SK-N-SH (cell line): ENCODE measurements at regions of chr2 and their contacts with region 1.

Region 1: GRCh38 chr2:160970052-160970965 is 189.9 kb upstream of the TANK start:
- DNase-seq: peak; percentile 69
- H3K4me3 ChIP-seq: no peak overlapping the region
- H3K27ac ChIP-seq: peak overlapping the region; percentile 62 to 75; a peak in 3 of 4 replicates
- H3K4me1 ChIP-seq: peaks cover 0 to 6% of the 10 kb centered on the region in 2 experiments; a peak in 2 of 4 replicates
- H3K27me3 ChIP-seq: no peaks in the 10 kb centered on the region
- CTCF ChIP-seq: peak; percentile 87
- EP300 ChIP-seq: no peak
- RAD21 ChIP-seq: peak; percentile 93

Region 2: DNA sequence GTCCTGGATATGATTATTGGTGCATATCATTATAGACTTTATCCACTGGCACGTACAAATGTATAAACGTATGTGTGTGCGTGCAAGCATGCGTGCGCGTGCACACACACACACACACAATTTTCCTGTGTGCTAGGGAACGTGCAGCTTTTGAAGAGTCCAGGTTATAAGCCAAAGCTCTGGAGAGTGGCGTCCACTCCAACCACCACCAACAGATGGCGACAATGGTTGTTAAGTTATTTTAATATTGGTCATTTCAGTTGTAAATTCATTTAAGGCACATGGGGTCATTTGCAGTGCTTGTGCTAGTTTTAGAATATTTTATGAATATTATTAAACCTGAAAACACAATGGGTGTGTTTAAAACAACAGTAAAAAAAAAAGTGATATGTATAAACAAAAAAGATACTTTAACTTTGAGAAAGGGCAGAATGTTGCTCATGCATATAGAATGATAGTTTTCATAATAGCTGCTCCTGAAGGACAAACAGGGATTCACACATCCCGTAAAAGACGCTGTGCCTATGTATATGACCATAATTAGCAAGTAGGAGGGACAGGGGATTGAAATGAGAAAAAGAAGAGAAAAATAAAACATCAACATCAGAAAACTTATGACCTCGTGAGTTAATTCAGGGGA is 646.0 kb before region 1 on chr2:
- CTCF ChIA-PET with region 1: interaction called, 25 read pairs
- POLR2A ChIA-PET with region 1: no interaction called
- DNase-seq: peak; percentile 39
- H3K4me3 ChIP-seq: no peak overlapping the region
- H3K27ac ChIP-seq: 0 out of 4 replicates have a peak overlapping the region, but pooled peaks of 1 of the 2 experiments have one; percentile 20
- H3K4me1 ChIP-seq: peaks cover 0 to 3% of the 10 kb centered on the region in 2 experiments; a peak in 3 of 4 replicates
- H3K27me3 ChIP-seq: no peaks in the 10 kb centered on the region
- CTCF ChIP-seq: peak; percentile 81
- EP300 ChIP-seq: no peak
- RAD21 ChIP-seq: peak; percentile 80

Region 3: GRCh38 chr2:160429248-160430000 is 540.9 kb before region 1 on chr2:
- CTCF ChIA-PET with region 1: interaction called, 29 read pairs
- POLR2A ChIA-PET with region 1: no interaction called
- DNase-seq: no peak
- H3K4me3 ChIP-seq: no peak overlapping the region; a peak in 1 of 4 replicates
- H3K27ac ChIP-seq: peak overlapping the region; percentile 39 to 64
- H3K4me1 ChIP-seq: peaks cover 17 to 40% of the 10 kb centered on the region in 2 experiments; a peak in 3 of 4 replicates
- H3K27me3 ChIP-seq: no peaks in the 10 kb centered on the region
- CTCF ChIP-seq: peak; percentile 77
- EP300 ChIP-seq: no peak
- RAD21 ChIP-seq: peak; percentile 64

Region 4: GRCh38 chr2:160489111-160489510 is 481.2 kb before region 1 on chr2:
- CTCF ChIA-PET with region 1: interaction called, 12 read pairs
- POLR2A ChIA-PET with region 1: no interaction called
- DNase-seq: no peak
- H3K4me3 ChIP-seq: no peak overlapping the region
- H3K27ac ChIP-seq: peak overlapping the region in 1 of 2 experiments; percentile 11; a peak in 1 of 4 replicates
- H3K4me1 ChIP-seq: peaks cover 26 to 37% of the 10 kb centered on the region in 2 experiments; a peak in 3 of 4 replicates
- H3K27me3 ChIP-seq: no peaks in the 10 kb centered on the region
- CTCF ChIP-seq: no peak
- EP300 ChIP-seq: no peak
- RAD21 ChIP-seq: no peak

Region 5: DNA sequence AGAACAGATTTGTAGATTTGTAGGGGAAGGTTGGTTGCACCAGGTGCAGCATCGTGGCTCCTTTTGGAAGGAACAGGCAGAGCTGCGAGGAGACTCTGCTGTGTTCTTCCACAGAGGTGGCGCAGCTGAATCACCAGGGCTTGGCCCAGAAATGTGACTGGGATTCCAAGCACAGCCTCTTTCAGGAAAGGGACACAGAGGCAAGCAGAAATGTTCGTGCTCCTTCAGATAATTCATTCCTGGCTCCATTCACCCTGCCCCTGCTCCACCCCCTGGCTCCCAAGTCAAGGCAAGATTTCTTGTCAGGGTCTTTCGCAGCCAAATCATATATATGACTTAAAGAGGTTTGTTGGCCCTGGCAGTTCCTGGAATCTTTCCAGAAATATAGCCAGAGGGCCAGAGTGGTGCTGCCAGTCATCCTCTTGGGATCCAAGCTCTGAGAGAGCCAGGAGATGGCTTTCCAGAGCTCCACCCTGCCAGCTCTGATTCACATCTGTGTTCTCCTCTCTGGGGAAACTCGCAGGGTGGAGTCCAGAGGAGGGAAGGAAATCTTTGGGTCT is 14.0 kb before region 1 on chr2:
- CTCF ChIA-PET with region 1: interaction called, 14 read pairs
- POLR2A ChIA-PET with region 1: no interaction called
- DNase-seq: peak; percentile 11
- H3K4me3 ChIP-seq: no peak overlapping the region
- H3K27ac ChIP-seq: no peak overlapping the region
- H3K4me1 ChIP-seq: peaks cover 0 to 3% of the 10 kb centered on the region in 2 experiments; a peak in 1 of 4 replicates
- H3K27me3 ChIP-seq: no peaks in the 10 kb centered on the region
- CTCF ChIP-seq: no peak
- EP300 ChIP-seq: no peak
- RAD21 ChIP-seq: no peak

Region 6: GRCh38 chr2:160984426-160985077 is 14.2 kb after region 1 on chr2:
- CTCF ChIA-PET with region 1: interaction called, 12 read pairs
- POLR2A ChIA-PET with region 1: no interaction called
- DNase-seq: no peak
- H3K4me3 ChIP-seq: no peak overlapping the region
- H3K27ac ChIP-seq: no peak overlapping the region
- H3K4me1 ChIP-seq: no peaks in the 10 kb centered on the region; a peak in 1 of 4 replicates
- H3K27me3 ChIP-seq: no peaks in the 10 kb centered on the region
- CTCF ChIP-seq: no peak
- EP300 ChIP-seq: no peak
- RAD21 ChIP-seq: no peak